Panc1 (cell line): ENCODE measurements at regions of chr1 and their contacts with region 1.

Region 1: GRCh38 chr1:80218112-80218511 is 1211.6 kb upstream of the ADGRL4 start:
- DNase-seq: peak; percentile 27
- ATAC-seq: no peak
- H3K4me3 ChIP-seq: no peak overlapping the region
- H3K27ac ChIP-seq: no peak overlapping the region
- H3K4me1 ChIP-seq: no peaks in the 10 kb centered on the region
- H3K27me3 ChIP-seq: no peaks in the 10 kb centered on the region
- CTCF ChIP-seq: peak; percentile 32; the same call in 1 of the 2 replicates

Region 2: GRCh38 chr1:79497193-79497773 is 720.8 kb before region 1 on chr1:
- CTCF ChIA-PET with region 1: no interaction called
- POLR2A ChIA-PET with region 1: no interaction called
- in situ Hi-C with region 1: no loop called
- intact Hi-C with region 1: loop called (anchors 10 kb)
- DNase-seq: peak; percentile 10
- ATAC-seq: no peak
- H3K4me3 ChIP-seq: no peak overlapping the region
- H3K27ac ChIP-seq: no peak overlapping the region
- H3K4me1 ChIP-seq: no peaks in the 10 kb centered on the region
- H3K27me3 ChIP-seq: no peaks in the 10 kb centered on the region
- CTCF ChIP-seq: peak; percentile 75; the same call in 1 of the 2 replicates

Region 3: DNA sequence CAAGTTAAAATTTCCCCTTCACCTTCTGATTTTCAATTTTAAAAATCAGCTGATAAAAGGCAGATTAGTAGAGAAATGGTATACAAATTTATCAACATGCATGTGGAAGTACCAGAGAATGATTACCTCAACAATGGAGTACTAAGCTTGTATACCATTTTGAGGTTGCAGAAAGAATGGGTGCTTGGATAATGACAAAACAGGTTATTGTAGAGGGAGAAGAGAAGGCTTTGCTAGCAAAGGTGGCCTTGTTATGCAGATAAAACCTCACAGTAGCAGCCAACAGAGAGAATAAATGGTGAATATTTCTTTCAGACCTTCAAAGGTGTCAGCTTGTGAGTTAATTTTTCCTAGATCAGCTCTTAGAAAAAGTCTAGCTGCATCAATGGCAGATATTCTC is 36.7 kb before region 1 on chr1:
- CTCF ChIA-PET with region 1: no interaction called
- POLR2A ChIA-PET with region 1: no interaction called
- in situ Hi-C with region 1: no loop called
- intact Hi-C with region 1: no loop called
- DNase-seq: no peak
- ATAC-seq: no peak
- H3K4me3 ChIP-seq: no peak overlapping the region
- H3K27ac ChIP-seq: no peak overlapping the region
- H3K4me1 ChIP-seq: no peaks in the 10 kb centered on the region
- H3K27me3 ChIP-seq: no peaks in the 10 kb centered on the region
- CTCF ChIP-seq: no peak